ENCODE measurements at regions of chr9 and their contacts with region 1.

Region 1: DNA sequence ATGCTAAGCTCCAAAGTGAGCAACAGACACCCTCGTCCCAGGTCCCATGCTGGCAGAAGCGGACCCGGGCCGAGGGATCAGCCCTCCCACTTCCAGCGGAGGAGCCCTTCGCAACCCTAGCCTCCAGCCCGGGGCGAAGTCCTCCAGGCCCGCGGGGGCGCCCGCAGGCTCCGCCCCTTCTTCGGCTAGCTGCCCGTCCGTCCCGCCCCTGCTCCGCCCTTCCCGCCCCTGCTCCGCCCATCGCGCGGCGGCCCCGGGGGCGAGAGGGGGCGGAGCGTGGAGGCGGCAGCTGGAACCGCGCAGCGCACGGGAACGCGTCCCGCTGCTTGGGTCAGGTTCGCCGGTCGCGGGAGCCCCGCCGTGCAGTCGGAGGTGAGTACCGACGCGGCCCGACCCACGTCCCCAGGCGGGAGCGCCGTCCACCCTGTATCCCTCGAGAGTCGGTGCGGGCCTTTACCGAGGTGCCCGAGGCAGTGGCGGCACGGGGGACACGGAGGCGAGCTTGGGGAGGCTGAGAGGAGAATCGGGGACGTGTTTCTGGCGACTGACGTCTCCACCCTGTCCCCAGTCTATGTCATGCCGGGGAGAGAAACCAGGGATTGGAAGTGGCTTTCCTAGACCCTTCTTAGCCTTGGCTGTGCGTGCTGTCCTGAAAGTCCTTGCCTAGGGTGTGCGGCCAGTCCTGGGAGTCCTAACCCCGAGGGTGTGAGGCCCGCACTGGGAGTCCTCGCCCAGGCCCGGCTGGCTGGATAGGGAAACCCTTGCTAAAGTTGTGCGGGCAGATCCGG is at the start of gene ACO1:
- DNase-seq: peak; percentile 91
- H3K4me3 ChIP-seq: peak within 1 kb of the TSS; percentile 50 to 91 (median 78)
- H3K27ac ChIP-seq: peak within 1 kb of the TSS; percentile 51
- H3K4me1 ChIP-seq: peaks cover 28% of the 10 kb centered on the region
- H3K27me3 ChIP-seq: no peaks in the 10 kb centered on the region
- CTCF ChIP-seq: no peak
- POLR2A ChIP-seq: peak; percentile 74
- total RNA-seq, gene ACO1: 54.1 and 56.9 TPM in 2 replicates

Region 2: GRCh38 chr9:32395490-32396216 is 11.1 kb after region 1 on chr9:
- CTCF ChIA-PET with region 1: interaction called, 71 read pairs
- POLR2A ChIA-PET with region 1: interaction called, 3 read pairs
- dilution Hi-C with region 1: no loop called
- intact Hi-C with region 1: loop called (anchors 1 kb)
- DNase-seq: peak; percentile 95
- H3K4me3 ChIP-seq: no peak overlapping the region
- H3K27ac ChIP-seq: peak overlapping the region; percentile 60
- H3K4me1 ChIP-seq: peaks cover 29% of the 10 kb centered on the region
- H3K27me3 ChIP-seq: no peaks in the 10 kb centered on the region
- CTCF ChIP-seq: peak; percentile 20 to 46
- POLR2A ChIP-seq: peak; percentile 31

Region 3: GRCh38 chr9:32550562-32551433 is 166.2 kb after region 1 on chr9:
- CTCF ChIA-PET with region 1: interaction called, 45 read pairs
- POLR2A ChIA-PET with region 1: interaction called, 3 read pairs
- dilution Hi-C with region 1: loop called (anchors 25 kb)
- intact Hi-C with region 1: loop called (anchors 1 kb)
- DNase-seq: peak; percentile 98
- H3K4me3 ChIP-seq: peak overlapping the region; percentile 71 to 88 (median 77)
- H3K27ac ChIP-seq: peak overlapping the region; percentile 92
- H3K4me1 ChIP-seq: peaks cover 17% of the 10 kb centered on the region
- H3K27me3 ChIP-seq: no peaks in the 10 kb centered on the region
- CTCF ChIP-seq: peak in 1 of 2 donors; percentile 22
- POLR2A ChIP-seq: no peak

Region 4: GRCh38 chr9:32571969-32572899 is 187.7 kb after region 1 on chr9:
- CTCF ChIA-PET with region 1: interaction called, 1,384 read pairs
- POLR2A ChIA-PET with region 1: no interaction called
- dilution Hi-C with region 1: loop called (anchors 25 kb)
- intact Hi-C with region 1: loop called (anchors 1 kb)
- DNase-seq: peak; percentile 88
- H3K4me3 ChIP-seq: peak overlapping the region; percentile 78 to 89 (median 88)
- H3K27ac ChIP-seq: peak overlapping the region; percentile 19
- H3K4me1 ChIP-seq: peaks cover 18% of the 10 kb centered on the region
- H3K27me3 ChIP-seq: peaks cover 0 to 4% of the 10 kb centered on the region in 2 experiments
- CTCF ChIP-seq: peak; percentile 74 to 80
- POLR2A ChIP-seq: no peak